AG04449 (cell line): ENCODE measurements at regions of chr12 and their contacts with region 1.

Region 1: GRCh38 chr12:62799126-62799736 is 135.7 kb downstream of the PPM1H start:
- DNase-seq: no peak
- H3K4me3 ChIP-seq: no peak overlapping the region
- CTCF ChIP-seq: peak; percentile 82

Region 2: GRCh38 chr12:62575036-62575435 is 224.2 kb before region 1 on chr12:
- CTCF ChIA-PET with region 1: interaction called, 347 read pairs
- POLR2A ChIA-PET with region 1: no interaction called
- DNase-seq: no peak
- H3K4me3 ChIP-seq: no peak overlapping the region
- CTCF ChIP-seq: no peak

Region 3: GRCh38 chr12:62581288-62582064 is 217.8 kb before region 1 on chr12:
- CTCF ChIA-PET with region 1: interaction called, 347 read pairs
- POLR2A ChIA-PET with region 1: no interaction called
- DNase-seq: no peak
- H3K4me3 ChIP-seq: no peak overlapping the region
- CTCF ChIP-seq: peak; percentile 51

Region 4: GRCh38 chr12:62603061-62603810 is 196.0 kb before region 1 on chr12:
- CTCF ChIA-PET with region 1: interaction called, 118 read pairs
- POLR2A ChIA-PET with region 1: interaction called, 17 read pairs
- DNase-seq: no peak
- H3K4me3 ChIP-seq: peak overlapping the region; percentile 90
- CTCF ChIP-seq: peak; percentile 73

Region 5: GRCh38 chr12:62813031-62813829 is 14.0 kb after region 1 on chr12:
- CTCF ChIA-PET with region 1: interaction called, 48 read pairs
- POLR2A ChIA-PET with region 1: no interaction called
- DNase-seq: no peak
- H3K4me3 ChIP-seq: peak overlapping the region; percentile 21; the same call in 1 of the 2 replicates
- CTCF ChIP-seq: peak; percentile 76

Region 6: DNA sequence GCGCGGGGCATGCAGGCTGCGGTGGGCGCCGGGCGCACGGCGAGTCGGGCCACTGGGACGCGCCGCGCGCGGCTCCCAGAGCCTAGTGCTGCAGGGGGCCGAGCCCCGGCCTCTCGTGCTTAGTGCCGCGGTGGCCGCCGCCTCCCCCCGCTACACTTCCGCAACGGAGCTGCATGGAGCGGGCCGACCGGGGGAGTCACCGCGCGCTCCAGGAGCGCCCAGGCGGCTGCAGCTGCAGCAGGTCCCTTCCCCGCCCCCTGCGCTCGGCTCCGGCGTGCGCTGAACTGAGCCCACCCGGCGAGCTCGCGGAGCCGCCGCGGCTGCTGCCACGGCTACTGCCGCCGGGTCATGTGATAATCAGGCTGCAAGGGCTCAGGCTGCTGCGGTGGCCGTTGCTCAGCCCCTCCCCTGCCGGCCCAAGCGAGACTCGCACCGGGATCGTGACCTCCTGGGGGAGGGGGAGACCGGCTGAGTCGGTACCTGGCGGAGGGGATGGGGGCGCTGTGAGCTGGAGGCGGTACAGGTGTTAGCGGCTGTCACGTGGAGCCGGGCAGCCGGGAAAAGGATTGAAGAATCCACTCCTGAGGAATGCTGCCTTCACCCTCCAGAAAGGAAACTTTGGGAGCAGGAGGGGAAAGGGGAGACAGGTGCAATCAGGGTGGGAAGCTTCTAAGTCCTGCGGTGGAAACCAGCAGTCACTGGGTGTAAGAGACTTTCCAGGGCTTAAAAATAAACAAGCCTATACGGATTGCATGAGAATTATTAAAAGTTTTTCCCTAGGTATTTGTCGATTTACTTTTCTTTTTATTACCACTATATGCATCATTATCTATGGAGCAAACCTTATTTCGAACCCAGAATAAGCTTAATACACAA is 135.8 kb after region 1 on chr12 and contains the start of gene PPM1H:
- CTCF ChIA-PET with region 1: interaction called, 11 read pairs
- POLR2A ChIA-PET with region 1: no interaction called
- DNase-seq: no peak
- H3K4me3 ChIP-seq: peak within 1 kb of the TSS; percentile 71
- CTCF ChIP-seq: no peak